ENCODE measurements at regions of chr20 and their contacts with region 1.

Region 1: DNA sequence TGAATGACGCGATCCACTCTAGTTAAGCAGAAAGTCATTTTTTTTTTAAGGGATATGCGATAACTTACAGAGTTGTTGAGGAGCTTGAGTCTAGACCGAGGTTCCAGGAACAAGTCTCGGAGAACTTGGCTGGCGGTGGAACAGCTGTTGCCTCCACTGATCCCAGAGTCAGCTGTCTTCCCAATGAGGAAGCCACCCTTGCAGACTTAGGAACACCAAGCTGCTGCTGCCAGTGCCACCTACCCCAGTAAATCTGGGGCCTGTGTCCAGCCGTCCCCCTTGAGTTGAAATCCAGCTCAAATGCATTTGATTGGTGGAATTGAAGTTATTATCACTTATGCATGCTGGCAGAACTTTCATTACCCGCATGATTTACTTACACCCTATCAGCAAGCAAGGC is 6.7 kb downstream of the PFDN4 start:
- DNase-seq: no peak
- ATAC-seq: no peak
- H3K4me3 ChIP-seq: no peak overlapping the region
- H3K4me3 Mint-ChIP-seq: no peak overlapping the region
- H3K27ac ChIP-seq: no peak overlapping the region
- H3K27ac Mint-ChIP-seq: no peak overlapping the region
- H3K4me1 ChIP-seq: peaks cover 0 to 3% of the 10 kb centered on the region in 2 experiments
- H3K4me1 Mint-ChIP-seq: peaks cover 23 to 42% (median 34%) of the 10 kb centered on the region in 3 donors
- H3K27me3 ChIP-seq: no peaks in the 10 kb centered on the region
- H3K27me3 Mint-ChIP-seq: no peaks in the 10 kb centered on the region

Region 2: DNA sequence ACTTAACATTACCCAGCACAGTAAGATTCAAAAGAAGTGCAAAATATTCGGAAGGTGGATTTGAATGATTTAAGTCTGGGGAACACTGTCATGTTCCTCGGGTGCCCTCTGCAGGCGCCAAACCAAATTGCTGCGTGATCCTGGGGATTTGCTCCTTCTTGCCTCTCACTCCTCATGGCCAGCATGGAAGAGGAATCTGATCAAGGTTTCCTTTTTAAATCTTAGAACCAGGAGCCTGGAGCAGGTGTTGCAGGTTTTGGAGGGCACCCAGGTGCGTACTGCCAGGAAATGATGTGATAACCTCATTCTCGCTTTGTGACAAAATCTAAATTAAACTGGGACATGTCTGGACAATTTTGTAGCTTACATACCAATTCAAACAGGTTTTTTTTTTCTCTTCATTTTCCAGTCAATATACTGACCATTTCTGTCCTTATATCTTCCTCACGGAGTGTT is 14.8 kb before region 1 on chr20:
- CTCF ChIA-PET with region 1: interaction called, 7 to 15 read pairs
- POLR2A ChIA-PET with region 1: interaction called in 1 of 2 experiments, 3 read pairs
- DNase-seq: peak; percentile 15 to 78 (median 56)
- ATAC-seq: peak; percentile 44 to 64 (median 58)
- H3K4me3 ChIP-seq: no peak overlapping the region
- H3K4me3 Mint-ChIP-seq: no peak overlapping the region
- H3K27ac ChIP-seq: no peak overlapping the region
- H3K27ac Mint-ChIP-seq: no peak overlapping the region
- H3K4me1 ChIP-seq: no peaks in the 10 kb centered on the region
- H3K4me1 Mint-ChIP-seq: no peaks in the 10 kb centered on the region
- H3K27me3 ChIP-seq: peaks cover 0 to 9% of the 10 kb centered on the region in 2 experiments
- H3K27me3 Mint-ChIP-seq: no peaks in the 10 kb centered on the region

Region 3: GRCh38 chr20:54897515-54898186 is 683.1 kb after region 1 on chr20:
- CTCF ChIA-PET with region 1: no interaction called
- POLR2A ChIA-PET with region 1: no interaction called
- DNase-seq: no peak
- ATAC-seq: no peak
- H3K4me3 ChIP-seq: no peak overlapping the region
- H3K4me3 Mint-ChIP-seq: no peak overlapping the region
- H3K27ac ChIP-seq: no peak overlapping the region
- H3K27ac Mint-ChIP-seq: no peak overlapping the region
- H3K4me1 ChIP-seq: no peaks in the 10 kb centered on the region
- H3K4me1 Mint-ChIP-seq: no peaks in the 10 kb centered on the region
- H3K27me3 ChIP-seq: no peaks in the 10 kb centered on the region
- H3K27me3 Mint-ChIP-seq: no peaks in the 10 kb centered on the region